ENCODE measurements at regions of chrX and their contacts with region 1.

Region 1: DNA sequence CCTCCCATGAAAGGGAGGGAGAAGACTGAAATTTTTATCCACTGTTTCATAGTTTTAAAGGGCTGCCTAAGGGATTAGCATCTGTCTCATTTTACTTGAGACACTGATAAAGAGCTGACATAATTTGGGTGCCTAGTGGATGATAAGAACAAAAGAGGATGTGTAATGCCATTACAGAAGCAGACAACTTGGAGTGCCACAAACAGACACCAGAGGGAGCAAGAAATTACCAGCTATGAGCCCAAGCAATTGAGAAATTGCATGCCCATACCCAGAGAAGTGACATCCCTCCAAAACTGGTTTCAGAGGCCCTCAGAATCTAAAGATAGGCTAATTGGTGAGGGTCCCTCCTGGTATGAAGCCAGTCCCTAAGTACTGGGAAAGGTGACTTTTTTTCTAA is 38.5 kb upstream of the POU3F4 start:
- DNase-seq: peak; percentile 49
- ATAC-seq: peak; percentile 57; the same call in 1 of the 2 replicates
- H3K4me3 ChIP-seq: no peak overlapping the region
- H3K27ac ChIP-seq: no peak overlapping the region
- H3K4me1 ChIP-seq: no peaks in the 10 kb centered on the region
- H3K27me3 ChIP-seq: no peaks in the 10 kb centered on the region
- CTCF ChIP-seq: peak; percentile 64

Region 2: DNA sequence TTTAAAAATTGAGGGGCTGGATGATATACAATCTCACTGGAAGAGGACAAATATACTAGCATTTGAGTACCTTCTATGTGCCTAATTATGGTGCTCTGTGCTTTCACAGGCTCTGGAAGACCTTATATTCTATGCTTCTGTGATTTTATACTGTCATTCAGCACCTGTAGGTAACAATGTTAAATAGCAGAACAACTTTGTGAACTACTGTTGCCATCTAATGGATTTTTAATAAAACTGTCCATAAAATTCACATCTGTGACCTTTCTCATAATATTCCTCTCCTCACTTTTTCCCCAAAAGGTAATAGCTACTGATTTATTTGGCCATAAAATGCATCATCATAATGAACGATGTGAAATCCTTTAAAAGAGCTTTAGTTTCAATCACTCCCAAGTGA is 60.4 kb after region 1 on chrX:
- CTCF ChIA-PET with region 1: no interaction called
- POLR2A ChIA-PET with region 1: no interaction called
- intact Hi-C with region 1: loop called (anchors 2 kb)
- DNase-seq: no peak
- ATAC-seq: no peak
- H3K4me3 ChIP-seq: no peak overlapping the region
- H3K27ac ChIP-seq: no peak overlapping the region
- H3K4me1 ChIP-seq: no peaks in the 10 kb centered on the region
- H3K27me3 ChIP-seq: peaks cover 3% of the 10 kb centered on the region; the same call in 1 of the 2 replicates
- CTCF ChIP-seq: no peak

Region 3: GRCh38 chrX:83630662-83631061 is 161.1 kb after region 1 on chrX:
- CTCF ChIA-PET with region 1: interaction called, 7 read pairs
- POLR2A ChIA-PET with region 1: no interaction called
- intact Hi-C with region 1: loop called (anchors 1 kb)
- DNase-seq: no peak
- ATAC-seq: no peak
- H3K4me3 ChIP-seq: no peak overlapping the region
- H3K27ac ChIP-seq: no peak overlapping the region
- H3K4me1 ChIP-seq: no peaks in the 10 kb centered on the region
- H3K27me3 ChIP-seq: no peaks in the 10 kb centered on the region
- CTCF ChIP-seq: no peak

Region 4: GRCh38 chrX:83934220-83934619 is 464.7 kb after region 1 on chrX:
- CTCF ChIA-PET with region 1: no interaction called
- POLR2A ChIA-PET with region 1: no interaction called
- intact Hi-C with region 1: loop called (anchors 2 kb)
- DNase-seq: peak; percentile 42
- ATAC-seq: peak; percentile 74
- H3K4me3 ChIP-seq: no peak overlapping the region
- H3K27ac ChIP-seq: no peak overlapping the region
- H3K4me1 ChIP-seq: no peaks in the 10 kb centered on the region
- H3K27me3 ChIP-seq: no peaks in the 10 kb centered on the region
- CTCF ChIP-seq: peak; percentile 52; the same call in 1 of the 2 replicates

Region 5: GRCh38 chrX:84216406-84216805 is 746.9 kb after region 1 on chrX:
- CTCF ChIA-PET with region 1: no interaction called
- POLR2A ChIA-PET with region 1: no interaction called
- intact Hi-C with region 1: no loop called
- DNase-seq: no peak
- ATAC-seq: no peak
- H3K4me3 ChIP-seq: no peak overlapping the region
- H3K27ac ChIP-seq: no peak overlapping the region
- H3K4me1 ChIP-seq: no peaks in the 10 kb centered on the region
- H3K27me3 ChIP-seq: no peaks in the 10 kb centered on the region
- CTCF ChIP-seq: no peak